Activated T-helper 1 cell treated with anti-CD3 and anti-CD28 coated beads, Interleukin-12 subunit alpha, Interleukin-12 subunit beta, Interleukin-2, Interleukin-4 antibody, amounts not matched to agents 30 ng/mL and 10 ng/mL and 1 ng/mL, durations not matched to agents 14 hours and 24 hours and 36 hours (primary cell): ENCODE measurements at regions of chr2 and their contacts with region 1.

Region 1: DNA sequence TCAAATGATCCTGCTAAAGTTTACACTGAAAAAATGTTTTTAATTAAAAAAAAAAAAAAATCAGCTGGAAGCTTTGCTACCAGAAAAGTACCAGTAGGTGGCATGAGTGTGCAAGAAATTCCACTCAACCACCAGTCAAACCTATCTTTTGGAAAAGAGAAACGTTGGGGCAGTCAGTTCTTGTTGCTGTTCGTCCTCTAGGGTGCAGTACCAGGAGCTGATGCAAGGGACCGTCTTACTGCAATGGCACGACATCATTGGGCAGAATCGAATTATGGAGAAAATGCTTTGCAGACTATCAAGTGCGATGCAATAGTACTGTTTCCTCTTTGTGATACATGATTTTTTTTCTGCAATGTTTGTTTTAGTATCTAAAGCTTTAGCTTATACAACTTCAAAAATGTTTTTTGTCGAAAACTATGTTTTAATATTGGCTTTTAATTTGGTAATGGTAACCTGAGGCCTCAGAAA is 18.3 kb downstream of the YPEL5 start:
- DNase-seq: peak; percentile 62
- H3K4me3 Mint-ChIP-seq: no peak overlapping the region
- H3K27ac Mint-ChIP-seq: no peak overlapping the region
- H3K4me1 Mint-ChIP-seq: peaks cover 5% of the 10 kb centered on the region
- H3K27me3 Mint-ChIP-seq: peaks cover 3% of the 10 kb centered on the region

Region 2: DNA sequence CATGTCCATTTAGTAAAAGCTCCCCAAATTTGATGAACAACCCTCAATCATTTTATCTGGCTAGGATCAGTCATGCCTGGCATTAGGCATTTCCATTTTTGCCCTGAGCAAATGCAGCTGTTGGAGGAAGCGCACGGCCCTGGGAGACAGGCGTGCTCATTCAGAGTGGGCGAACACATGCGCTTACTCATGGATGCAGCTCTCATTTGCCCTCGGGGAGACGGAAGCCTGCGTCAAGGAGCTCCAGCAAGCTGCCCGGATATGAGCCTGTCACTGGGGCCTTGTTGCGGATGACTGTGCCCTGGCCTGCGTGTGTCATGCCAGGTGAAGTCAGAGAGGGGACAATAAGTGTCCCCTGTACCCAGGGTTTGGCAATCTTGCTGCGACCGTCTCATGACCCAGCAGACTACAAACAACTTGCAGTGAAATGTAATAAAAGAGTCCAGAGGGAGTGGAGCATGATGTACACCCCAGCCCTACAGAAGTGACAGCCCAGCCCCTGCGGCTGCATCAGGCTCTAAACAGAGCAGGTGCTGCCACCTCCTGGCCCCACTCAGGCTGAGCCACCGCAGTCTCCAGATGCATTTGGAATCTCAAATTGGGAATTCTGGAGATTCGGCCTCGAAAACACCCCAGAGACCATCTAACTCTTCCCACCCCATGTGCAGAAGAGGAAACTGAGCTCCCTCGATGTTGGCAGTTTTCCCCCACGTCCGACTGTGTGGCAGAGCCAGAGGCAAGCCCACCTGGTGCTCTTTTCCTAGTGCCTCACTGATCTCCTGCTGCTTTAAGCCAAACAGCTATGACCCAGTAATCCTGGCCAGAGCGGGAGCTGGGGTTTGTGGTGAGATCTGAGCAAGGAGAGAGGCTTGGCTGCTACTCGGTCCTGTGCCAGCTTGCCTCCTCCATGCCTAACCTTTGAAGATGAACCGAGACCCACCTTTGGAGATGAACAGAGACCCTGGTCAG is 138.7 kb before region 1 on chr2:
- intact Hi-C with region 1: no loop called
- DNase-seq: no peak
- H3K4me3 Mint-ChIP-seq: no peak overlapping the region
- H3K27ac Mint-ChIP-seq: no peak overlapping the region
- H3K4me1 Mint-ChIP-seq: no peaks in the 10 kb centered on the region
- H3K27me3 Mint-ChIP-seq: peaks cover 9% of the 10 kb centered on the region

Region 3: DNA sequence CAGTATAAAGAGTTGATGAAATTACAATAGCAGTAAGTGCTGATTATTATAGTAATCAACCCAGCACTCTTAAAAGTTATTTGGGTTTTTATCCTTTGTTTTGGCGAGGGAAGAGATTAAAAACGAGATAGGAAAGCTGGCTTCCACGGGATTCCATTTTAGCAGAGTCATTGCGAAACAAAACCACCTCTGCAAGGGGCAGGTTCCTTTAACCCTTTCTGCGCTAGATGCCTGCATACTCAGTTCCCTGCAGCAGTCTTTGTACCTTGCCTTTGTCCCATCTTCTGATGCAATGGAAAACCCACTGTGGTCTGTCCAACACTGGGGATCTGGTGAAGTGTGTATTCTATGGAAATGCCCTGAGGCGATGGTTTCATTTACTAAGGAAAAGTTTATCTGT is 15.6 kb before region 1 on chr2:
- intact Hi-C with region 1: no loop called
- DNase-seq: no peak
- H3K4me3 Mint-ChIP-seq: peak overlapping the region; percentile 15
- H3K27ac Mint-ChIP-seq: peak overlapping the region; percentile 23
- H3K4me1 Mint-ChIP-seq: peaks cover 46% of the 10 kb centered on the region
- H3K27me3 Mint-ChIP-seq: no peaks in the 10 kb centered on the region

Region 4: GRCh38 chr2:30208452-30208851 is 43.4 kb after region 1 on chr2:
- intact Hi-C with region 1: loop called (anchors 1 kb)
- DNase-seq: no peak
- H3K4me3 Mint-ChIP-seq: no peak overlapping the region
- H3K27ac Mint-ChIP-seq: no peak overlapping the region
- H3K4me1 Mint-ChIP-seq: peaks cover 22% of the 10 kb centered on the region
- H3K27me3 Mint-ChIP-seq: peaks cover 6% of the 10 kb centered on the region

Region 5: GRCh38 chr2:30472326-30472725 is 307.2 kb after region 1 on chr2:
- intact Hi-C with region 1: loop called (anchors 5 kb)
- DNase-seq: no peak
- H3K4me3 Mint-ChIP-seq: no peak overlapping the region
- H3K27ac Mint-ChIP-seq: peak overlapping the region; percentile 5
- H3K4me1 Mint-ChIP-seq: peaks cover 23% of the 10 kb centered on the region
- H3K27me3 Mint-ChIP-seq: no peaks in the 10 kb centered on the region

Region 6: GRCh38 chr2:31170071-31170698 is 1005.1 kb after region 1 on chr2:
- intact Hi-C with region 1: loop called (anchors 1 kb)
- DNase-seq: peak; percentile 31
- H3K4me3 Mint-ChIP-seq: no peak overlapping the region
- H3K27ac Mint-ChIP-seq: no peak overlapping the region
- H3K4me1 Mint-ChIP-seq: no peaks in the 10 kb centered on the region
- H3K27me3 Mint-ChIP-seq: peaks cover 3% of the 10 kb centered on the region

Region 7: GRCh38 chr2:31523871-31524492 is 1358.9 kb after region 1 on chr2:
- intact Hi-C with region 1: loop called (anchors 1 kb)
- DNase-seq: peak; percentile 17
- H3K4me3 Mint-ChIP-seq: no peak overlapping the region
- H3K27ac Mint-ChIP-seq: no peak overlapping the region
- H3K4me1 Mint-ChIP-seq: no peaks in the 10 kb centered on the region
- H3K27me3 Mint-ChIP-seq: peaks cover 6% of the 10 kb centered on the region